Breast epithelium (tissue), 4 donors: ENCODE measurements at regions of chr15 and their contacts with region 1.

Region 1: DNA sequence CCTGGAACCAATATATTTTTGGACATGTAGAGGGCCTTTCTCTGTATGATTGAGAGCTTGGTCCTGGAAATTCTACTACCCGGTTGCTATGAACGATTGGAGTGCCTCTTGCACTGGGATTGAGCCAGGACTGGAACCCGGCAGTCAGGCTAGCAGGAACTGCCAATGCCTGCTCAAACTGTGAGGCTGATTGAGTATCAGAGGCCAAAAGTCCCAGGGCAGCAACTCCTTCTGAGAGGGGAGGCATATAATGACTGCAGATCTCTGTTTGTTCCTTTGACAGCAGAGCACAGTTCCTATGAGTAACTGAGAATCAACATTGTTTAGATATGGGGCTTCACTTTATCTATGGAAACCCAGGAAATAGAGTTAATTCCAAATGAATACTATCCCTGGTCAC is 12.9 kb downstream of the IQCH start:
- DNase-seq: no peak
- H3K4me3 ChIP-seq: no peak overlapping the region
- H3K27ac ChIP-seq: no peak overlapping the region
- H3K4me1 ChIP-seq: no peaks in the 10 kb centered on the region
- H3K27me3 ChIP-seq: no peaks in the 10 kb centered on the region
- CTCF ChIP-seq: no peak
- POLR2A ChIP-seq: no peak

Region 2: DNA sequence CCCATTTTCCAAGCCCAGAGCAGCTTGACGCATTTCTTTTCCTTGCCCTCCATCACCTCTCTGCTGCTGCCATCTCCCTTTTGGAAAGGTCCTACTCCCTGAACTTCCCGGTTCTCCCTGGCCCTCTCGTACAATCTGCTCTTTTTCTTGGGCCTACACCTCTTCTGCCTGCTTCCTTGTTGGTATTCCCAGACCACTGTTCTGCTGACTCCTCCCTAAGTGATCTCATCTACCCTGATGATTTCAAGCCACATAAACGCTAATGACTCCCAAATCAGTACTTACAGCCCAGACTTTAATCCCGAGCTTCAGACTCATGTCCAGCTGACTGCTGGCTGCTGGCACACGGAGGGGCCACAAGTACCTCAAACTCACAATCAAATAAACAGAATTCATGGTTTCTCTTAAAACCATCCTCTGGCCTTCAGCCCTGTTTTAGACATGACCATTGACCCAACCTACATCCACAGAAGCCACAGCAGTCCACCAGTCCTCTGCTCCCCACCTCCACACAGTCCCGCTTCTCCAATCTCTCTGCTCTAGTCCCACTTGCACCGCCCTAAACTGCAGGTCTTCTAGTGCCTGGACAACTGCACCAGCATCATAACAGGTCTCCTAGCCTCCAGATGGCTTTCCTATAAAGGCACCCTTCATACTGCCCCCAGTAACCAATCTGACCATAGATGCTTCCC is 70.6 kb before region 1 on chr15:
- intact Hi-C with region 1: no loop called
- DNase-seq: no peak
- H3K4me3 ChIP-seq: no peak overlapping the region
- H3K27ac ChIP-seq: peak overlapping the region; percentile 31 to 78
- H3K4me1 ChIP-seq: no peaks in the 10 kb centered on the region
- H3K27me3 ChIP-seq: no peaks in the 10 kb centered on the region
- CTCF ChIP-seq: no peak
- POLR2A ChIP-seq: no peak

Region 3: DNA sequence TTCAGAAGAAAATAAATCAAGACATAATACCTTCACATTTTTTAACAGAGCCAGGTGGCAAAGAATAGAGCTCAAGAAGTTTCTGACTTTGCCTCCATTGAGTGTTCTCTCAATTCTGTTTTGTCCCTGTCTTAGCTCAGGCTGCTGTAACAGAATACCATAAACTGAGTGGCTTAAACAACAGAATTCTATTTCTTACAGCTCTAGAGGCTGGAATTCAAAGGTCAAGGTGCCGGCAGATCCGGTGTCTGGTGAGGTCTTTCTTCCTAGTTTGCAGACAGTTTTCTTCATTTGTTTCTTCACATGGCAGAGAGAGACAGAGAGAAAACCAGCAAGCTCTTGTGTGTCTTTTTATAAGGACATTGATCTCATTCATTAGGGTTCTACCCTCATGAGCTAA is 12.8 kb after region 1 on chr15:
- intact Hi-C with region 1: loop called (anchors 1 kb)
- DNase-seq: no peak
- H3K4me3 ChIP-seq: no peak overlapping the region
- H3K27ac ChIP-seq: no peak overlapping the region
- H3K4me1 ChIP-seq: no peaks in the 10 kb centered on the region
- H3K27me3 ChIP-seq: no peaks in the 10 kb centered on the region
- CTCF ChIP-seq: no peak
- POLR2A ChIP-seq: no peak